Motor neuron (in vitro differentiated cells): ENCODE measurements at regions of chr2 and their contacts with region 1.

Region 1: DNA sequence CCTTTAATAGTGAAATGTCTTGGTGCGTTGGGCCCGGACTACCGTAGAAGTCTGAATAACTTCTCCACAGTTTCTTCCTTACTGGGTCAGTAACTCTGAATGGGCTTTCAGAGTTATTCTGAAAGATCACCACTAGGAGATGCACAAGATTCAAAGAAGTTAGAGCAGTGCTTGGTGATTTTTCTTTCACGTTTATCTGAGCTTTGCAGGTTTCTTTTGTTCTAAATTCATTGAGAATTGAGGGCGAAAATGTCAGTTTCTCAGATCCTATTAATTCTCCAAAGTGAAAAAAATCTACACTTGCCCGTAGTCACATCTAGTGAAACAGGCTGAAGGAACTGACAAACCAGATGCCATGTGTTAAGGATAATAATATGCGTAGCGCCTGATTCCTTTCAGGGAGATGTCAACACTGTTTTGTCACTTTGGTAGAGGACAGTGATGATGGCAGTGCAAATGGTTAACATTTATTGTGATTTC is 70.1 kb downstream of the QPCT start:
- ATAC-seq: peak; percentile 58 to 92 (median 77)
- H3K4me3 ChIP-seq: no peak overlapping the region
- H3K27ac ChIP-seq: no peak overlapping the region
- H3K4me1 ChIP-seq: peaks cover 3% of the 10 kb centered on the region in 2 donors

Region 2: GRCh38 chr2:37481244-37481643 is 66.7 kb after region 1 on chr2:
- in situ Hi-C with region 1: no loop called
- ATAC-seq: no peak
- H3K4me3 ChIP-seq: no peak overlapping the region
- H3K27ac ChIP-seq: no peak overlapping the region
- H3K4me1 ChIP-seq: no peaks in the 10 kb centered on the region

Region 3: GRCh38 chr2:37549598-37549997 is 135.1 kb after region 1 on chr2:
- in situ Hi-C with region 1: loop called in 1 of 9 experiments (anchors 25 kb)
- ATAC-seq: no peak
- H3K4me3 ChIP-seq: no peak overlapping the region
- H3K27ac ChIP-seq: no peak overlapping the region
- H3K4me1 ChIP-seq: no peaks in the 10 kb centered on the region

Region 4: DNA sequence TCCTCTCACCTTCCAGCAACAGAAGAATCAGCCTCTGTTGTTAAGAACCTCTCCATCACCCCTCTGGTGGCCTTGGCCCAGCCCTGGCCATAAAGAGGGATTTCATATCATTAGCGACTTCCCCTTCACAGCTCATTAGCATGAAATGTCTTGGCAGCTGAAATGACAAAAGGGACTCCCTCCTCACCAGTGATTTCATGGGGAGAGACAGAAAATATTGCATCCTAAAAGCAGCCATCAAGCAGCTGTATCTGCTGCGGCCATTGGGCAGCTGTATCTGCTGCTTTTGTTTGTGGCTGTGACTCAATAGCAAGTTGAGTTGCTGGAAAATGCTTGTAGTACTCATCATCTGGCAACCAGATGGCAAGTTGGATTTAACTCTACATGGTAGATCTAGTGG is 404.7 kb after region 1 on chr2:
- in situ Hi-C with region 1: loop called in 1 of 9 experiments (anchors 10 kb)
- ATAC-seq: peak in 3 of 8 experiments; percentile 24 to 93 (median 63)
- H3K4me3 ChIP-seq: no peak overlapping the region
- H3K27ac ChIP-seq: no peak overlapping the region
- H3K4me1 ChIP-seq: no peaks in the 10 kb centered on the region

Region 5: DNA sequence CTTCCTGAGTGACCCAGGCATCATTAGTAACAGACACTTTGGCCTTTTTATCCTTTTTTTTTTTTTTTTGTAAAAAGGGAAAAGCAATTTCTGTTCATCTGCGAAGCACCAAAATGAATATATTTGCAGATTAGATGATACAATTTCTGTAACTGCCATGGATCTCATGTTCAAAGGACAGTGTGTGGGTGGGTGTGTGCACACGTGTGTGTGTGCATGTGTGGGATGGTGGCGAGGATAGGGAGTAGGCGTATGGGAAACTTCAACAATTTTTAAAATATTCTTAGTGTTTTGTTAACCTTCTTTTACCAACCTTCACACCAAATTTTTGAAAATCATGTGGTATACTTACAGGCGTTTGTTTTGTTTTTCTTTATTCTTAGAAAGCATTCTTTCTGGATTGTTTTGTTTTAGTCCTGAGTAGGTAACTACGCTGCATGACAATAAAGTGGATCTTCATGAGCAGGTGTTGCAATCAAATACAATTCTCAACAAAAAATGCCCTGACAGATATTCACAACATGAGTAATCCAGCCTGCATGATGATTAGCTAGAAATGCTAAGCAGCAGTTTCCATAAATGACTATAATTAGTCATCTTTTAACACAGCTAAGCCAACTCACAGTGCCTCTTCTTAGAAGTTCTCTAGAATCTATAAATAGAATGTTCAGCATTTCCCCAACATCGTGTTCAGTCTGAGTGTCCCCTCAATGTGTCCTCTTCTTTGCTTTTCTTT is 457.1 kb after region 1 on chr2:
- in situ Hi-C with region 1: loop called in 3 of 9 experiments (anchors 10 to 25 kb)
- ATAC-seq: peak; percentile 26 to 97 (median 72)
- H3K4me3 ChIP-seq: no peak overlapping the region
- H3K27ac ChIP-seq: no peak overlapping the region
- H3K4me1 ChIP-seq: peaks cover 7 to 11% of the 10 kb centered on the region in 2 donors

Region 6: DNA sequence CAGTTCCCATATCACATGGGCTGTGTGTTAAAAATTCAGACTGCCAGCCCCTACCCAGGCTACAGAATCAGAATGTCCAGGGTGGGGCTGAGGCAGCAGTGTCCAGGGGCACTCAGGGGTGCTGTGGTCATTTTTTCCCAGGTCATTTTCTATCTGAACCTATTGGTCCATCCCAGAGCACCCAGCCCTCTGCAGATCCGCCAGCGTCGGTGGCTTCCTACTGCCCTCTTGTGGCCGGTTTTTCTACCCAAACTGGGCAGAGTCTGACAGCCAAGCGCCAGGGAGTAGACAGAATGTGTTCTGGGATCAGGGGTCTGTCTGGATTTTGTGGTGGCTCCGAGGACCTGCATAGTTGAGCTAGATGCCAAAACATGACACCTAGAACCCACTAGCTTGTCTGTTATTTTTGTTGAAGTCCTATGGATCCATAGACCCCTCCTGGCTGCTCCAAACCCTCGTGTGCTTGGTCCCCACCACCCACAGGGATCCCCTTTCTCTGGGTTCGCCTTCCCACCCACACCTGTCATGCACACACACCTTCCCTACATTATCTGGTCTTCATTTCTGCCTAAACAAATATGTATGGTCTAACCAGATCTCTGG is 476.5 kb after region 1 on chr2:
- in situ Hi-C with region 1: loop called in 1 of 9 experiments (anchors 25 kb)
- ATAC-seq: peak; percentile 76 to 100 (median 87)
- H3K4me3 ChIP-seq: no peak overlapping the region
- H3K27ac ChIP-seq: no peak overlapping the region
- H3K4me1 ChIP-seq: no peaks in the 10 kb centered on the region